ENCODE measurements at regions of chr6 and their contacts with region 1.

Region 1: DNA sequence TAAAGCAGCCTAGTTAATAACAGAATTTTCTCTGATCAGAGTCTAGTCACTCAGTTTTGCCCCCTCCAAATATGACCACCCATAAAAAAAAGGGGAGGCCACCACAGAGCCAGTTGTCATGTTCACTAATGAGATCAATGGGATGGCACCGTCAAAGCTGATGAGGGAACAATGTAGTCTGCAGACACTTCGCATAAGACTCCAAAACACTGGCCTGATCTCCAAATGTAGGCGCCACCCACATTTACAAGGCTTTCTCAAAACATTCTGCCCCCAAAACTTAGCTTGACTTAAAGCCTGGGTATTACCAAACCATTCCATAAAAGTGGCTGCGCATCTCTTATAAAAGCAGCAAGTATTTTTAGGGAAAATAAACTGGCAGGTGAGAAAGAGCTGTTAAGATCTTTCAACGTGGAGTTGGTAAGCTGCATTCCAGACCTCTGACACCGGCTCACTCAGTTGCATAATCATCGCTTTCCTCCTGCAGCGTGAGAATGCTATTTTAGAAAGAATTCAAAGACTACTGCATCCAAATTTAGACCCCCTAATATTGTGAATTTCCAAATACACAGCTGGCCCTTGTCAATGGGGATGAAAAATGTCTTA is 59.3 kb downstream of the TBC1D7 start:
- DNase-seq: peak; percentile 51 to 55
- H3K4me3 ChIP-seq: no peak overlapping the region
- H3K4me3 Mint-ChIP-seq: no peak overlapping the region
- H3K27ac Mint-ChIP-seq: peak overlapping the region; percentile 82
- H3K4me1 ChIP-seq: peaks cover 40% of the 10 kb centered on the region
- H3K4me1 Mint-ChIP-seq: peaks cover 38% of the 10 kb centered on the region
- H3K27me3 ChIP-seq: no peaks in the 10 kb centered on the region
- H3K27me3 Mint-ChIP-seq: no peaks in the 10 kb centered on the region
- CTCF ChIP-seq: no peak

Region 2: GRCh38 chr6:13165518-13166172 is 103.4 kb before region 1 on chr6:
- CTCF ChIA-PET with region 1: no interaction called
- POLR2A ChIA-PET with region 1: no interaction called
- intact Hi-C with region 1: no loop called
- DNase-seq: no peak
- H3K4me3 ChIP-seq: no peak overlapping the region
- H3K4me3 Mint-ChIP-seq: no peak overlapping the region
- H3K27ac Mint-ChIP-seq: no peak overlapping the region
- H3K4me1 ChIP-seq: no peaks in the 10 kb centered on the region
- H3K4me1 Mint-ChIP-seq: peaks cover 6% of the 10 kb centered on the region
- H3K27me3 ChIP-seq: no peaks in the 10 kb centered on the region; the same call in 1 of the 2 replicates
- H3K27me3 Mint-ChIP-seq: peaks cover 20% of the 10 kb centered on the region
- CTCF ChIP-seq: no peak

Region 3: DNA sequence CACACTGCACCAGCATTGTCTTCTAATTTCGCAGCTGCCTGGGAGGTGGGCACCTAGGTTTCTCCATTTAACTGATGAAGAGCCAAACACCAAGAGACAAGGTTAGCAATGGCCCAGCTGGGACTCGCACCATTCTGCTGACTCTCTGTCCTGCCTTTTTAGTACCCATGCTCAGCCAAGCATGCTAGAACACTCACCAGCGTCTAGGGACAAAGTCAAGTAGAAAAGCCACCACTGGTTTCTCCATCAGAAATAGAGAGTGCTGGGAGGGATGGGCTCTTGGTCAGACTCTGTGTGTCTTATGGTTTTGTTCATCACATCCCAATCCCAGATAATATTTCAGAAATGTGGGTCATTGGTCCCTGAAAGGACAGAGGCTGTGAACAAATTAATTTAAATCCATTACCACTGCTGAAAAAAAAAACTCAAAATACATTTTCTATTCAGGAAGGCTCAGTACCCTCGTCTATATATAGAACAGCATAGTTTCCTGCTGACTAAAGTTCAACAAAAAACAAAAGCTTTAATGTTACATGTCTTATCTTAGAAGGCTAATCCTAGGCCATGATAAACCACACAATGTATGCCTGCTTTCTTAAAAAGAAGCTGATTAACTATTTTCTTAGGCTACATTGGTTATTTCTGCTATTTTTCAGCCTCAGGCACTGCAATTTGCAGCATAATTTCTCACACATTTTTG is 51.7 kb before region 1 on chr6:
- CTCF ChIA-PET with region 1: no interaction called
- POLR2A ChIA-PET with region 1: no interaction called
- intact Hi-C with region 1: loop called (anchors 5 kb)
- DNase-seq: peak in 1 of 2 experiments; percentile 25
- H3K4me3 ChIP-seq: no peak overlapping the region
- H3K4me3 Mint-ChIP-seq: peak overlapping the region; percentile 1
- H3K27ac Mint-ChIP-seq: peak overlapping the region; percentile 81
- H3K4me1 ChIP-seq: peaks cover 39% of the 10 kb centered on the region
- H3K4me1 Mint-ChIP-seq: peaks cover 23% of the 10 kb centered on the region
- H3K27me3 ChIP-seq: no peaks in the 10 kb centered on the region
- H3K27me3 Mint-ChIP-seq: no peaks in the 10 kb centered on the region
- CTCF ChIP-seq: no peak